Tibial artery (tissue), 4 donors: ENCODE measurements at regions of chr12 and their contacts with region 1.

Region 1: DNA sequence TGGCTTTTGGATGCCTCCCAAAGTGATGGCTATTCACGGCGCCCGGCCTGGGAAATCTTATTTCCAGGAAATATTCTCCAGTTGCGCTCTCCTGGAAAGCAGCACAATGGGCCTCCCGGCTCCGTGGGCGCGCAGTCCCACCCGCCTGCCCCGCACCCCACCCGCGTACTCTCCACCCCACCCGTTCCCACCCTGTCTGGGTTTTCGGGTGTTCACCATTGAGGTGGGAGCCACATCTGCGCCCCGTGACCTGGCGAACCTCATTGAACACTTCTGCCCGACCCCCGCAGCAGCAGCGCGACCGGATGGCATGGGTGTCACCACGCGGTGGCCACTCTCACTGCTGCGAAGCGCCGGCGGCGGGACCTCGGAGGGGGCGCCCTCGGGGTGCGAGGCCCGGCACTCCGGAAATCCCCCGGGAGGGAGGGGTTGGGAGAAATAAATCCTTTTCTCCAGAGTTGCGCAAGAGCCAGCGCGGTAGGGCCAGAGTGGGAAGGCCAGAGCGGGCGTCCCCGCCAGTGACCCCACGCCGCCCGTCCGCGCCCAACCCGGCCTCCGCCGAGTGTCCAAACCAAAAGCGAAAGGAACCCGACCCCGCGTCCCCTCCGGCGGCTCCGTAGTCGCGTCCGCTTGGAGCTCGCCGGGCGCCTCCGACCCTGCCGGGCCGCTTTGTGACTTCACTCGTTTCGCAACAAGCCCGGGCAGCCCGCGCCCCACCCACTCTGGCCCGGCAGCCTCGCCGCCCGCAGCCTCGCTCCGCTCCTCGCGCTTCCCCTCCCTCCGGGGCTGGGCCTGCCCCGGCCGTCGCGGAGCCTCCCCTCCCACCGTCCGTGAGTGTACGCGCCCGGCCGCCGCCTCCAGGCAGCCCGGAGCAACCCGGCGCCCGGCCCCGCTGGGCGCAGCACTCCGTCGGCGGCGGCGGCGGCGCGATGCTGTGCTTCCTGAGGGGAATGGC is at the start of gene DRAM1:
- DNase-seq: peak; percentile 89 to 95
- H3K4me3 ChIP-seq: peak within 1 kb of the TSS; percentile 71 to 74
- H3K27ac ChIP-seq: peak within 1 kb of the TSS; percentile 94 to 99
- H3K4me1 ChIP-seq: peaks cover 0 to 18% (median 4%) of the 10 kb centered on the region in 4 donors
- H3K27me3 ChIP-seq: no peaks in the 10 kb centered on the region
- CTCF ChIP-seq: peak; percentile 11 to 12

Region 2: GRCh38 chr12:101830367-101831325 is 46.5 kb before region 1 on chr12 and contains the start of gene GNPTAB:
- intact Hi-C with region 1: loop called (anchors 2 kb)
- DNase-seq: peak; percentile 86 to 93
- H3K4me3 ChIP-seq: peak within 1 kb of the TSS; percentile 67 to 74
- H3K27ac ChIP-seq: peak within 1 kb of the TSS; percentile 68 to 81
- H3K4me1 ChIP-seq: peaks cover 0 to 22% (median 9%) of the 10 kb centered on the region in 4 donors
- H3K27me3 ChIP-seq: no peaks in the 10 kb centered on the region
- CTCF ChIP-seq: peak; percentile 78 to 93

Region 3: DNA sequence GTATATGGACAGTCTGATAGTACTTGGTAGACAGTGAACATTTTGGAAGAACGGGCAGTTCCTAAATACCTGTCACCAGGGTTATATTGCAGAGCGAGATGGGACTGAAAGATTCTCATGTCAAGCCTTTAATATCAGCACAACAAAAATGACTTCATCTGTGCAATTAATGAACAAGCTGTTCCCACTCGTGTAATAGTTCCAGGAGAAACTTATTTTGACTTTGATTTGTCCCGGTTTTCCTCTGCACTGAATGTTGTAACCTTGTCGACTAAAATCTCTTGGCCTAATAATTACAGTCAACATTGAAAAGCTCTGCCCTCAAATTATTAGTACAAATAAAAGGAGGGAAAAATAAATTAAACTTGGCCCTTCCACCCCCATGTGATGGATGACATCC is 105.2 kb after region 1 on chr12:
- intact Hi-C with region 1: no loop called
- DNase-seq: no peak
- H3K4me3 ChIP-seq: no peak overlapping the region
- H3K27ac ChIP-seq: no peak overlapping the region
- H3K4me1 ChIP-seq: no peaks in the 10 kb centered on the region
- H3K27me3 ChIP-seq: no peaks in the 10 kb centered on the region
- CTCF ChIP-seq: no peak

Region 4: GRCh38 chr12:102061560-102062418 is 184.7 kb after region 1 on chr12 and contains the start of gene WASHC3:
- intact Hi-C with region 1: loop called (anchors 10 kb)
- DNase-seq: peak; percentile 97 to 98
- H3K4me3 ChIP-seq: peak within 1 kb of the TSS; percentile 79 to 87
- H3K27ac ChIP-seq: peak within 1 kb of the TSS; percentile 89 to 93
- H3K4me1 ChIP-seq: peaks cover 0 to 4% (median 4%) of the 10 kb centered on the region in 4 donors
- H3K27me3 ChIP-seq: no peaks in the 10 kb centered on the region
- CTCF ChIP-seq: peak in 1 of 2 experiments; percentile 6